ENCODE measurements at regions of chr4 and their contacts with region 1.

Region 1: DNA sequence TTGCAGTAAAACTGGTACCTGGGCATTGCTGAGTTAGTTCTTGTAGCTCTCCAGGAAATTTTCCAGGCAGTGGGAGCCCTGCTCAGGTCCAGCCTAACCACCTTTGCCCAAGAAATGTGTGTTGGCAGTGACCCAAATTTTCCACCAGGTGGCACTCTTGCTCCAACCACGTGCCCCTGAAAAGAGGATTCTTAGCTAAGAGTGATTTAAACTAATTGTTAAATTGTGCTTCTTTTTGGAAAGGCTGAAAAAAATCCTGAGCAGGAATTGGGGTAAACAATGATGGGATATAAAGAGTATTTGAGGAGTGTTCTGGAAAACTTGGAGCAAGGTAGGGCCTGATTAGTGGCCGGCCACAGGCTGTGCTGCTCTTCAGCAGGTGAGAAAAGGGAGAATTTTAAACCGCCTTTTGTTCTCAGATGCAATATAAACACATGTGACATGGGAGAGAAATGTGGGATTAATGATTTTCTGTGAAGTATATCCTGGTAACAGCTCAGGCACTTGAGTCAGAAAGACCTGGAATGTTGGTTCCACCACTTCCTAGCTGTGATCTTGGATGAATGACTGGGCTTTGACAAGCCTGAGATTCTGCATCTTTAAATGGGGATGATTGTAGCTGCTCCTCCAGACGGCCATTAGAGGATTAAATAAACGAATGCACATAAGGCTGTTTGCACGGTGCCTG is 219.6 kb downstream of the PTTG2 start:
- DNase-seq: peak; percentile 86
- H3K4me3 ChIP-seq: no peak overlapping the region
- H3K27ac ChIP-seq: no peak overlapping the region
- H3K4me1 ChIP-seq: peaks cover 14 to 58% (median 33%) of the 10 kb centered on the region in 6 donors
- H3K27me3 ChIP-seq: no peaks in the 10 kb centered on the region
- CTCF ChIP-seq: peak; percentile 78 to 95 (median 90)
- POLR2A ChIP-seq: no peak

Region 2: GRCh38 chr4:38062088-38062893 is 117.5 kb before region 1 on chr4:
- intact Hi-C with region 1: loop called (anchors 5 kb)
- DNase-seq: no peak
- H3K4me3 ChIP-seq: peak overlapping the region in 3 of 8 donors; percentile 6 to 47 (median 30)
- H3K27ac ChIP-seq: peak overlapping the region in 5 of 8 donors; percentile 29 to 52 (median 43)
- H3K4me1 ChIP-seq: peaks cover 0 to 16% (median 10%) of the 10 kb centered on the region in 6 donors
- H3K27me3 ChIP-seq: no peaks in the 10 kb centered on the region
- CTCF ChIP-seq: peak; percentile 70 to 91 (median 80)
- POLR2A ChIP-seq: no peak

Region 3: DNA sequence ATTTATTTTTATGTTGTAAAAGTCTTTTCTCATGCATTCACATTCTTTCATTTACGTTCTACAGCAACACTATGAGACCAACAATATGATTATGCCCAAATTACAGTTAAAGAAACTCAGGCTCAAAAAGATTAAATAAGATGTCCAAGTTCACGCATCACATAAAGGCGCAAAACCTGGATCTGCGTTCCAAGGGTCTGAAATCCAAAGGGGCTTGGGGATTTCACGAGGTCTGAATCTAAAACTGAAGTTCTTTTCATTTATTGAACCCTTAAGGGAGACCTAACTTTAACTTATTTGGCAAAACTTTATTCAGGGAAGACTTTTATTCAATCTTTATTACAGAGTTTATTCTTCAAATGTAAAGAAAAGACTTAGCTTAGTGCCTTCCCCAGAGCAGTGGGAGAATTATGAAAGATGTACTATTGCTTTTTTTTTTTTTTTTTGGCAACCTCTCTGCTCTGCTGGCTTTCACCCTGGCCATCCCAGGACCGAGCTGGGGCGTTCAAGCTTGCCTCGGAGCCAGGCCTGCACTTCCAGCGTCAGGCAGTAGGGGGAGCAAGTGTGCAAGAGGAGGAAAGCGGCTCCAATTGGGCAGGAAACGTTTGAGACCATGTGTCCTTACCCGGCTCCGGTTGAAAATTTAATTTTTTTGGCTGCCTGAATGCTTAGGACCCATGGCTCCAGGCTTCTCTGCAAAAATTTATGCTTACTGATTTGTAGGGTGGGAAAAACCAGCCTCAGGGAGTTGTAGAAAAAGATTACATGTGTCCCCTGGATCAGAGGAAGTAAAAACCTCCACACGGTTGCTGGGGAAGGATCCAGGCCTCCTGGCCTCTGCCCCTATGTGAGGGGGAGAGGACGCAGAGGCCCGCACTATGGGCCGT is 139.9 kb after region 1 on chr4:
- intact Hi-C with region 1: loop called (anchors 10 kb)
- DNase-seq: peak; percentile 97
- H3K4me3 ChIP-seq: peak overlapping the region in 6 of 8 donors; percentile 32 to 67 (median 36)
- H3K27ac ChIP-seq: peak overlapping the region; percentile 79 to 95 (median 92)
- H3K4me1 ChIP-seq: peaks cover 18 to 39% (median 23%) of the 10 kb centered on the region in 6 donors
- H3K27me3 ChIP-seq: no peaks in the 10 kb centered on the region
- CTCF ChIP-seq: peak; percentile 97 to 99 (median 99)
- POLR2A ChIP-seq: no peak

Region 4: GRCh38 chr4:38675146-38676121 is 495.6 kb after region 1 on chr4:
- intact Hi-C with region 1: loop called (anchors 2 kb)
- DNase-seq: no peak
- H3K4me3 ChIP-seq: peak overlapping the region in 2 of 8 donors; percentile 12 to 21
- H3K27ac ChIP-seq: peak overlapping the region; percentile 43 to 100 (median 99)
- H3K4me1 ChIP-seq: peaks cover 63 to 100% (median 86%) of the 10 kb centered on the region in 6 donors
- H3K27me3 ChIP-seq: no peaks in the 10 kb centered on the region
- CTCF ChIP-seq: peak; percentile 78 to 92 (median 89)
- POLR2A ChIP-seq: no peak

Region 5: DNA sequence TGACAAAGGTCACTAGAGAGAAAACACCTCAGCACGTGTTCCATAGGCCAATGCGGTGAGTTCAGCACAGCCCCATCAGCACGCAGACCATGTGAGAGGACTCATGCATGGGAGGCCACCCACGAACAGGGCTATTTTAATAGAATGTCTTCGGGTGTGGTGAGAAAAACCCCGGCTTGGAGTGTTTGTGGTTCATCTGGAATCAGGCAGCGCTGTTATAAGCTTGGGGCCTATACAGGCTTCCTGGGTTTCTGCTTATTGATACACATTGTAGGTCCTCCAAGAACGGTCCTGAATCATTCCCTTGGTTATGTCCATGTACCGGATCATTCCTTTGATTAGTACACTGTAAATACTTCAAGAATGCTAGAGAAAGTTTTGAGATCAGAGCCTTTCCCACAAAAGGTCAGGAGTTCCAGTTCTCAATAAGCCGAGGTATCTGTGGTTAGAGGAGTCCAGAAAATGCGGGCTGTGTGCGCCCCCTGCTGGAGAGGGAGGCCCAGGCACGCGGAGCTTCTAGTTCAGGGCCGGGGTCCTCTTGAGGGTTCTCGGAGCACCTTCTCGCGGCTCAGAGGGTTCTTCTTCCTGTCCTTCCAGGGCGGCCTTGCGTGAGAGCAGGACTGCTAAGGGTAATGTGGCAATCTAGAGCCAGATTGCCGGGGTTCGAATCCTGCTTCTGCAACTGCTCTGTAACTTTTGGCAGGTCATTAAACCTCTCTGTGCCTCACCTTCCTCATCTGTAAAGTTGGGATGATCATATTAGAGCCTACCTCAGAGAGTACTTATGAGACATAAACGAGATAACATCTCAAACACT is 551.2 kb after region 1 on chr4:
- intact Hi-C with region 1: loop called (anchors 2 kb)
- DNase-seq: peak; percentile 95
- H3K4me3 ChIP-seq: no peak overlapping the region
- H3K27ac ChIP-seq: peak overlapping the region in 3 of 8 donors; percentile 1 to 22 (median 2)
- H3K4me1 ChIP-seq: peaks cover 9 to 29% (median 12%) of the 10 kb centered on the region in 6 donors
- H3K27me3 ChIP-seq: no peaks in the 10 kb centered on the region
- CTCF ChIP-seq: peak; percentile 84 to 99 (median 93)
- POLR2A ChIP-seq: no peak

Region 6: DNA sequence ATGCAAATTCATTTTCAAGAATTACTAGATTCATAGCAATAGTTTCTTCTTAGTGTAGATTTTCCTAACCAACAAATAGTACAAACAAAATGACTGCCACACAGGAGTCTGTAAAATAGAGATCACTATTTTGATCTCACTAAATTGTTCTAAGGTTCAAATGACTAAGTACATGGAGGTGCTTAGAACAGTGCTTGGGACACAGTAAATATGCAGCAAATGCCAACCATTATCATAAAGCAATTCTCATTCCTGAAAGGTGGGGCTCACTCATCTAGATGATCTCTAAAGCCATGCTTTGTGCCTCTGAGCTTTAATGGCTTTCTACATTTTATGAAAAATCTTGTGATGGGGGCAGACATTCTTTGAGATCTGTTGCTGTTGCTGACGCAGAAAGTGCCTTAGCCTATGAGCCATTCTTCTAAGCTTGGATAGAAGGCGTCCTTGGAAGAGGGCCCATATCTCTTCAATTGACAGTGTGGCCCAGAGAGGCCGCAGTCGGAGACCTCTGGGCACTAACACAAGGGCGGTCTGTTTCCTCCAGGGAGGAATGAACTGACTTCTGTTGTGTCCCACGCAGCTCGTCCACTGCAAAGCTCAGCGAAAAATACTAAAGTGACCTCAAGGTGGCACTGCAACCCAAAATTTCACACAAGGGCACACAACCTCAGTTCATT is 579.4 kb after region 1 on chr4:
- intact Hi-C with region 1: no loop called
- DNase-seq: no peak
- H3K4me3 ChIP-seq: no peak overlapping the region
- H3K27ac ChIP-seq: peak overlapping the region in 7 of 8 donors; percentile 9 to 91 (median 86)
- H3K4me1 ChIP-seq: peaks cover 6 to 74% (median 50%) of the 10 kb centered on the region in 6 donors
- H3K27me3 ChIP-seq: no peaks in the 10 kb centered on the region
- CTCF ChIP-seq: peak; percentile 34 to 85 (median 80)
- POLR2A ChIP-seq: no peak

Region 7: DNA sequence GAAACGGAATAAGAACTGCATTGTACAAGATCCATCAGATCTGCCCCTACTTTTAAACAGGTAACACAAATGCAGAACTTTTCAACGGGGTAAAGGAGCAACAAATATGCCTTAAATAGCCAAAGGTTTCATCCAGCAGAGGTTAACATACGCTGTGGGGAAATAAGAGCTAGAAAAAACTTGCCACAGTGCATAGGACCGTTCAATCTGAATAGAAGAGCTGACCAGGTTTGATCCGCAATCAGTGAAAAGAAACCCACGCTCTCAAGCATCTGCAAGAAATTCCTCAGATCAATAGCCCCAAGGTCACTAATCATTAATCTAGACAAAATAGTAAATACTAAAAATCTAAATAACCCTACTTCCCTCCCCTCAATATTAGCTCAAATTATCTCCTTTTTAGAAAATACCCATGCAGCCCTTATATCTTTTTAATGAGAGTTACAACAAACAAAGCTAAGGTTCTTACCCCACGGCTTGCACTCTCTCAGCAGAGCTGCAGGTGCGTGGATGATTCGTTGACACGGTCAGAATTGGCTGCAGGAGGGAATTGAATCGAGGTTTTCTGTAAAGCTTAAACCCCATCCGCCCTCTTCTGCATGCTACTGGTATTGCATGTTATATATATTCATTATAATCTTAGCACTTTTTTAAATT is 602.7 kb after region 1 on chr4 and contains the start of gene TLR10:
- intact Hi-C with region 1: no loop called
- DNase-seq: no peak
- H3K4me3 ChIP-seq: peak within 1 kb of the TSS; percentile 15 to 68 (median 39)
- H3K27ac ChIP-seq: peak within 1 kb of the TSS in 7 of 8 donors; percentile 10 to 90 (median 75)
- H3K4me1 ChIP-seq: peaks cover 0 to 83% (median 23%) of the 10 kb centered on the region in 6 donors
- H3K27me3 ChIP-seq: no peaks in the 10 kb centered on the region
- CTCF ChIP-seq: peak; percentile 56 to 82 (median 74)
- POLR2A ChIP-seq: peak in 1 of 3 donors; percentile 39
- total RNA-seq, gene TLR10: 29.6 to 70.1 (median 42.0) TPM

Measured in spleen (tissue), 13 donors.